ENCODE measurements at regions of chr7 and their contacts with region 1.

Region 1: GRCh38 chr7:127708788-127709187 is 56.8 kb downstream of the SND1 start:
- DNase-seq: peak; percentile 3
- H3K4me3 ChIP-seq: no peak overlapping the region
- H3K27ac ChIP-seq: no peak overlapping the region
- H3K4me1 ChIP-seq: peaks cover 0 to 9% (median 4%) of the 10 kb centered on the region in 3 donors
- H3K27me3 ChIP-seq: no peaks in the 10 kb centered on the region
- CTCF ChIP-seq: peak; percentile 36 to 76 (median 66)
- POLR2A ChIP-seq: no peak

Region 2: GRCh38 chr7:127776776-127777386 is 68.1 kb after region 1 on chr7:
- intact Hi-C with region 1: no loop called
- DNase-seq: no peak
- H3K4me3 ChIP-seq: no peak overlapping the region
- H3K27ac ChIP-seq: no peak overlapping the region
- H3K4me1 ChIP-seq: no peaks in the 10 kb centered on the region
- H3K27me3 ChIP-seq: no peaks in the 10 kb centered on the region
- CTCF ChIP-seq: no peak
- POLR2A ChIP-seq: no peak

Region 3: DNA sequence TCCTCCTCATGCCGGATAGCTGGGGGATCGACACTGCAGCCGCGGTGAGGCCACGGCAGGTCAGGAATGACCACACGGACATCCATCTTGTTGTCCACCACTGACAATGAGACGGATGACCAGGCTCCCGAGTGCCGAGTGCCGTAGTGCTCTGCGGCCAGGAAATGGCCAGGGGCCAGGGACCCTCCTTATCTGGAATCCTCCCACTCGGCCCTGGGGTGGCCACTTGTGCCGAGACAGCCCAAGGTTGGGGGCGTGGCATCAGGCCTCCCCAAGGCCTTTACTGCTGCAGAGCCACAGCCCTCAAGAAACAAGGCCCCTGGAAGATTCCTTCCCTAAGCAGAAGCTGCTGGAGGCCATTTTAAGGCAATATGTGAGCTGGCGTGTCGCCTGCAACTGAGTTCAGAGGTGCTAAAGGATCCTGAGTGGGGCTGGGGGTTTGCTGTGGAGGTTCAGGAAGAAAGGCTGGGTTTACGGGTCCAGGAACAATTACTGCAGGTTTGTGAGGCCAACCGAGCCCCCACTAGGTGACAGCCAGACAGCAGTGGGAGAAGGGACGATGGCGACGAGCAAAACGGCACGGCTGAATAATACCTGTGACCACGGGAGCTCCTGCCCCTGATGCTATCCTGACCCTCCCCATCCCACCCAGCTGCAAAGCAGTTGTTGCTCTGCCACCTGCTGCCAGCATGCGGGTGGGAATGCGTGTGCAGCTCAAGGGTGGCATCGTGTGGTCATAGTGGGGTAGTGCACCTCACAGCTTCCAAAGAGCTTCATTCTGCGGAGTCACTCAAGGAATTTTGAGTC is 500.6 kb after region 1 on chr7:
- intact Hi-C with region 1: loop called (anchors 5 kb)
- DNase-seq: no peak
- H3K4me3 ChIP-seq: no peak overlapping the region
- H3K27ac ChIP-seq: no peak overlapping the region
- H3K4me1 ChIP-seq: peaks cover 0 to 9% (median 0%) of the 10 kb centered on the region in 3 donors
- H3K27me3 ChIP-seq: peaks cover 0 to 62% (median 0%) of the 10 kb centered on the region in 4 donors
- CTCF ChIP-seq: peak; percentile 96 to 98 (median 97)
- POLR2A ChIP-seq: no peak

Measured in esophagus squamous epithelium (tissue), 5 donors.